ENCODE measurements at regions of chr4 and their contacts with region 1.

Region 1: GRCh38 chr4:103099691-103100392 is at the start of gene BDH2:
- DNase-seq: peak in 28 of 42 donors; percentile 9 to 84 (median 54)

Region 2: GRCh38 chr4:102439236-102439614 is 660.6 kb before region 1 on chr4:
- intact Hi-C with region 1: loop called (anchors 10 kb)
- DNase-seq: peak in 2 of 42 donors; percentile 3 to 41

Region 3: DNA sequence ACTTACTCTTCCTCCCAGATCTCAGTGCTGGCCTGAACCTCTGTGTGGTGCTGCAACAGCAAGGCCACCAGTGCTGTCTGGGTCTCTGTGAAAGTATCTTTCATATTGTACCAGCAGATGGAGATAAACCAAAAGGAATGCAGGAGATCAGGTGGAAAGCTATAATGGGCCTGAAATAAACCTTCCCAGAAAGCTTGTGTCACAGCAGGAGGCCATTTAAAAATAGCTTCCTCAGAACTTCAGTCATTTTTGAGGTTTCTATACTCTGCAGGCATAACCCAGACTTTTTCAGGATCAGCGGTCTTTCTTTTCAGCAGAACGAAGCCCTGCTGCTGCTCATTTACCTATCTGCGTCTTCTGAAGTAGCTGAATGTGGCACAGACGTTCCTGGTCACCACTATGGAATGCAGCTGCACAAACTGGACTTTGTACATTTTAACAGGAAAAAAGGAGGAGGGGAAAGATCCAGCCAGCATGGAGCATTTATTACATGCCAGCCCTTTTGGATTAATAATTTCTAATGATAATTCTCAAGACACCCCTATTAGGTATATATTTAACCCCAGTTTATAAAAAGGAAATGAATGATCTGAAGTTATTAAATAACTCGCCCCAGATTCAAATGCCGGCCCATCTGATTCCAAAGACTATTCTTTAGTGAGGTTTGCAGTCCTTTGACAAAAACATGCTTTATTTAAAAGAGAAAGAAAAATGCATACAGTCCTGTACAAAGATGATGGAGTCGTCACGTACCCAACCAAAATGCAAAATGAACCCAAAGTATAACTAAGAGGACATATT is 478.9 kb before region 1 on chr4:
- intact Hi-C with region 1: loop called (anchors 10 kb)
- DNase-seq: peak in 24 of 42 donors; percentile 18 to 77 (median 36)

Region 4: GRCh38 chr4:103046416-103047290 is 53.2 kb before region 1 on chr4:
- intact Hi-C with region 1: loop called (anchors 10 kb)
- DNase-seq: peak in 23 of 42 donors; percentile 5 to 60 (median 24)